Mammary epithelial cell (primary cell): ENCODE measurements at regions of chr5 and their contacts with region 1.

Region 1: DNA sequence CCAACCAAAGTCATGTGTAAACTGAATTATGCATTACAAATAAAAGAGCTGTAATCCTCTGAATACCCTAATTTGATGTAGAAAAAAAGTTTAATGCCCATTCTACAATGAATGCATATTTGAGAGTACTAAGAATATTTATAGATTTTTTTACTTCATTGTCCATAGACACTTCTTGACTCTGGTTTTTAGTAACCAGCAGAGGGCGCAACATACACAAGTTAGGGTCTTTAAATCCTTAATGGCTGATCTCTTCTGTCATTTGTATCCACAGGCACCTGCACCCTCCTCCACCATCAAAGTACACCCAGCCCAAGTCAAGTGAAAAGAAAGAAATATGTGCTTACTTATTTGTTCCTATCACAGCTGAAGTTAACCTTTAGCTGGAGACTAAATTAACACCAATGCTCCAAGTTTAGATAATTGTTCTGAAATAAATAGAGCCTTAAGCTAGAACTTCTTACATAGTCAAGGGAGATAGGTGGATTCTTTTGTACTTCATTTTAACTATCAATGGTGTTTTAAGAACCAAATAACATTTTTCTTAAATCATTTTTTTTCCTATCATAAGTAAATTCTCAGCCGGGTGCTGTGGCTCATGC is 524.2 kb upstream of the DAB2 start:
- DNase-seq: peak; percentile 50
- H3K4me3 ChIP-seq: no peak overlapping the region
- H3K27ac ChIP-seq: no peak overlapping the region
- H3K4me1 ChIP-seq: no peaks in the 10 kb centered on the region
- H3K27me3 ChIP-seq: no peaks in the 10 kb centered on the region
- CTCF ChIP-seq: peak; percentile 62 to 67

Region 2: GRCh38 chr5:39714036-39714698 is 234.8 kb before region 1 on chr5:
- CTCF ChIA-PET with region 1: no interaction called
- dilution Hi-C with region 1: no loop called
- in situ Hi-C with region 1: loop called in 1 of 2 experiments (anchors 10 kb)
- intact Hi-C with region 1: loop called (anchors 1 kb)
- DNase-seq: peak; percentile 64
- H3K4me3 ChIP-seq: no peak overlapping the region
- H3K27ac ChIP-seq: no peak overlapping the region
- H3K4me1 ChIP-seq: no peaks in the 10 kb centered on the region
- H3K27me3 ChIP-seq: peaks cover under 1% of the 10 kb centered on the region
- CTCF ChIP-seq: peak; percentile 76 to 83

Region 3: GRCh38 chr5:40171971-40172370 is 223.0 kb after region 1 on chr5:
- CTCF ChIA-PET with region 1: no interaction called
- dilution Hi-C with region 1: no loop called
- in situ Hi-C with region 1: no loop called
- intact Hi-C with region 1: loop called (anchors 10 kb)
- DNase-seq: peak; percentile 79
- H3K4me3 ChIP-seq: no peak overlapping the region
- H3K27ac ChIP-seq: peak overlapping the region; percentile 16
- H3K4me1 ChIP-seq: peaks cover 3% of the 10 kb centered on the region
- H3K27me3 ChIP-seq: no peaks in the 10 kb centered on the region
- CTCF ChIP-seq: no peak

Region 4: DNA sequence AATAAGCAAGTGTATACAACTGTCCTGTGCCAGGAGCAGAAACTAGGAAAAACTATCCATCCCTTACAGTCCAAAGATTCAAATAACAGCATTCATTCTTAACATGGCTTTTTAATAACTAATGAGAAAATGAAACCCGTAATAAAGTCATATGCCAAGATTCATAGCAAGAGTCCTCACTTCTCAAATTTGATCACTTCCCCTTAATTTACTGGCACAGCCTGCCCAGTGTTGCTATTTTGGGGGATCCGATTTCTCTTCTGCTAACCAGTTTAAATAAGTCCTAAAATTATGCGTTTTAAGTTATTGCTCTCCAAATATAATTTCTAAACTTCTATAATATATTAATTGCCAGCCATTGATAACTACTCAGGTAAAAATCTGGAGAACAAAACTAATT is 553.8 kb after region 1 on chr5:
- CTCF ChIA-PET with region 1: no interaction called
- dilution Hi-C with region 1: no loop called
- in situ Hi-C with region 1: no loop called
- intact Hi-C with region 1: loop called (anchors 5 kb)
- DNase-seq: no peak
- H3K4me3 ChIP-seq: no peak overlapping the region
- H3K27ac ChIP-seq: no peak overlapping the region
- H3K4me1 ChIP-seq: no peaks in the 10 kb centered on the region
- H3K27me3 ChIP-seq: no peaks in the 10 kb centered on the region
- CTCF ChIP-seq: no peak